Left cardiac atrium (tissue), 4 donors: ENCODE measurements at regions of chr4 and their contacts with region 1.

Region 1: GRCh38 chr4:120071192-120071795 is 4.6 kb upstream of the MAD2L1 start:
- DNase-seq: no peak
- ATAC-seq: no peak

Region 2: GRCh38 chr4:120228086-120228485 is 156.8 kb after region 1 on chr4:
- intact Hi-C with region 1: no loop called
- DNase-seq: no peak
- ATAC-seq: peak; percentile 41 to 61

Region 3: GRCh38 chr4:121096629-121097028 is 1025.3 kb after region 1 on chr4:
- intact Hi-C with region 1: loop called (anchors 10 kb)
- DNase-seq: no peak
- ATAC-seq: no peak

Region 4: DNA sequence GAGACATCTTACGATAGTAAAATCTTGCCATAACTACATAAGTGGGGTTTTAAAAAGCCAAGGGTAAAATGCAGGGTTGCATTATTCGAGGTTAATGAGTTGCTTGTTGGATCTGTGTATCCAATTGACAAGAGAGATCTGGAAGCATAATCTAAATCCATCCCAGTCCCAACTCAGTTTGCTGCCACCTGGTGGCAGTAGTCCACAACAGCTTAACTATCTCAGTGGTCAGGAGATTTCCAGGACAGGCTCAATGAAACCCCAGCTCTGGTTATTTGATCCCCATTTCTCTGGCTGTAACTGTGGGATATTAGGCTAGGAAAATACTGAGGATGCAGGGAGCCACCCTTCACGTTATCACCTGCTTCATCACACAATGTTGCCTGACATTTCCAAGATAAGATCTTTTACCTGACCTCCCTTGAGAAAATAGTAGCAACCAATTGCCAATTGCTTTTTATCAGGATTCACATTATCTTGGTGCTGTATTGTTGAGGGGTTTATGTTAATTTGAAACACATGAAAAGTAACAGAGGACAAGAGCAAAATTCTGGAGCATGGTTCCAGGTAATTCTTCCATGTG is 1181.0 kb after region 1 on chr4:
- intact Hi-C with region 1: loop called in 1 of 2 experiments (anchors 5 kb)
- DNase-seq: peak; percentile 63
- ATAC-seq: peak; percentile 69 to 72